ENCODE measurements at regions of chr16 and their contacts with region 1.

Region 1: GRCh38 chr16:72787514-72788268 is 260.2 kb downstream of the ZFHX3 start:
- DNase-seq: peak; percentile 56
- ATAC-seq: peak; percentile 88
- H3K4me3 Mint-ChIP-seq: peak overlapping the region; percentile 85
- H3K27ac Mint-ChIP-seq: peak overlapping the region; percentile 65
- H3K4me1 Mint-ChIP-seq: peaks cover 15% of the 10 kb centered on the region
- H3K27me3 Mint-ChIP-seq: peaks cover 5% of the 10 kb centered on the region
- CTCF ChIP-seq: no peak

Region 2: DNA sequence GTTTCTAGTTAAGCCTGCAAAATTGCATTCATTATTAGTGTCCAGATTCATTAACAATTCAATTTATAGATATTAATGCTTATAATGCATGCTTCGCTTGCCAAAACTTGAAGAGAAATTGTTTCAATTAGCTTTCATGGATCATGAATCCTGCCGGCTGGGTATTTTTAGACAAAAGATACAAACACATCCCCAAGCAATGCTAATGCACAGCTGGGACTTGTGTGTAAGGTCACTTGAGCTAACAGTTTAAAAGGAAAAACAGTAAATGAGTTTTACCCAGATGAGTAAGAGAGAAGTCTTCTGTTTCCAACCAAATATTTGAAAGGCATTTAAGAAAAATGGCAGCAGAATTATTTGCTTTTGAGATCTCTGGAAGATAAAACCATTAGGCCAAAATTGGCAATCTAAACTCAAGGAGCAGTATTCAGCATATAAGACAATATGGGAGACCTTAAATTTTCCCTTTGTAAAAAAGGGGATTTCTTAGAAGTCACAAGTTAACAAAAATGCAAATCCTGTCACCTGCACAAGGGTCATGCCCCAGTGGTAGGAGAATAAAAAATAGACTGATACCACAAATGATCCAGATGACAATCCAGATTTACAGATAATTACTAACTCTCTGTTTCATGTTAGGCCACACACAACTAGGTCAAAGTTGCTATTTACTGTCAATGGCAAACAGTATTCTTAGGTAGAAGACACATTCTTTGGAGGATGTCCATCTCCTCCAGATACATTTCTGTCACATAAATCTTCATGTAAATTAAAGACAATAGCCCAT is 197.3 kb before region 1 on chr16:
- CTCF ChIA-PET with region 1: no interaction called
- POLR2A ChIA-PET with region 1: no interaction called
- intact Hi-C with region 1: loop called (anchors 5 kb)
- DNase-seq: no peak
- ATAC-seq: peak; percentile 75
- H3K4me3 Mint-ChIP-seq: peak overlapping the region; percentile 61
- H3K27ac Mint-ChIP-seq: peak overlapping the region; percentile 82
- H3K4me1 Mint-ChIP-seq: peaks cover 56% of the 10 kb centered on the region
- H3K27me3 Mint-ChIP-seq: no peaks in the 10 kb centered on the region
- CTCF ChIP-seq: no peak

Region 3: DNA sequence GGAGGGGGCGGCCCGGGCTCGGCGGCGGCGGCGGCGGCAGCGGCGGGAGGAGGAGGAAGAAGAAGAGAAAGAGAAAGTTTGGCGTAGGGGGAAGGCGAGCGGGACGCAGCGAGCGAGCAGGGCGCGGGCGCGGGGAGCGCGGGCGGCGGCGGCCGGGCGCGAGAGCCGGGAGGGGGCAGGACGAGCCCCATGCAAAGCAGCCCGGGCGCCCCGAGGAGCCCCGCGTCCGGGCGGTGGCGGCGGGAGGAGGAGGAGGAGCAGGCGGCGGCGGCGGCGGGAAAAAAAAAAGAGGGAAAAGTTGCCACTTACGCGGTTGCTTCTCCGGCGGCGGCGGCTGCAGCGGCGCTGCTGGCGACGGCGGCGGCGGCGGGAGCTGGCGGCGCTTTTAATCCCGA is 270.5 kb after region 1 on chr16:
- CTCF ChIA-PET with region 1: no interaction called
- POLR2A ChIA-PET with region 1: no interaction called
- intact Hi-C with region 1: loop called (anchors 5 kb)
- DNase-seq: peak; percentile 55
- ATAC-seq: peak; percentile 70
- H3K4me3 Mint-ChIP-seq: peak overlapping the region; percentile 88
- H3K27ac Mint-ChIP-seq: no peak overlapping the region
- H3K4me1 Mint-ChIP-seq: peaks cover 22% of the 10 kb centered on the region
- H3K27me3 Mint-ChIP-seq: peaks cover 33% of the 10 kb centered on the region
- CTCF ChIP-seq: no peak

Region 4: GRCh38 chr16:73113336-73113735 is 325.6 kb after region 1 on chr16:
- CTCF ChIA-PET with region 1: no interaction called
- POLR2A ChIA-PET with region 1: no interaction called
- intact Hi-C with region 1: no loop called
- DNase-seq: no peak
- ATAC-seq: no peak
- H3K4me3 Mint-ChIP-seq: no peak overlapping the region
- H3K27ac Mint-ChIP-seq: no peak overlapping the region
- H3K4me1 Mint-ChIP-seq: no peaks in the 10 kb centered on the region
- H3K27me3 Mint-ChIP-seq: peaks cover 3% of the 10 kb centered on the region
- CTCF ChIP-seq: no peak